ENCODE measurements at regions of chr9 and their contacts with region 1.

Region 1: DNA sequence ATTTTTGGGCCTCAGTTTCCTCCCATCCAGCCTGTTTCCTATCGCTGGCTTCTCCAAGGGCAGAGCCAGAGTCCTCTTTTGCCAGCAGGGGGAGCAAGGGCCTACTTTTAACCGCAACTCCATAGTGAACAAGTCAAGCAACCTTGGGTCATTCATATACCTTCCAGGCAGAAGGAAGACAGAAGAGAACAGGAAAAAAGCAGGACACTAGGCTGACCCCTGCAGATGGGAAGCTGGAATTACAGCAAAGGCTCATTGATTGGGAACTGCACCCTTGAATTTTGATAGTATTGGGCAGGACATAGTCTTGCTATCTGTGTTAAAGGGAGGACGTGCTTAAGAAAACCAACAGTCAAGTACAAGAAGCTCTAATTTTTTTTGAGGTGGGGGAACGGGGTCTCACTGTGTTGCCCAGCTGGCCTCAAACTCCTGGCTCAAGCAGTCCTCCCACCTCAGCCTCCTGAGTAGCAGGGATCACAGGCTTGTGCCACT is 30.1 kb downstream of the QRFP start:
- DNase-seq: peak; percentile 75
- ATAC-seq: peak; percentile 81
- H3K4me3 Mint-ChIP-seq: no peak overlapping the region
- H3K27ac Mint-ChIP-seq: no peak overlapping the region
- H3K4me1 Mint-ChIP-seq: peaks cover 2% of the 10 kb centered on the region
- H3K27me3 Mint-ChIP-seq: no peaks in the 10 kb centered on the region

Region 2: GRCh38 chr9:130220352-130220751 is 646.2 kb before region 1 on chr9:
- CTCF ChIA-PET with region 1: no interaction called
- POLR2A ChIA-PET with region 1: no interaction called
- intact Hi-C with region 1: no loop called
- DNase-seq: no peak
- ATAC-seq: no peak
- H3K4me3 Mint-ChIP-seq: no peak overlapping the region
- H3K27ac Mint-ChIP-seq: no peak overlapping the region
- H3K4me1 Mint-ChIP-seq: no peaks in the 10 kb centered on the region
- H3K27me3 Mint-ChIP-seq: no peaks in the 10 kb centered on the region

Region 3: GRCh38 chr9:130461218-130461630 is 405.3 kb before region 1 on chr9:
- CTCF ChIA-PET with region 1: no interaction called
- POLR2A ChIA-PET with region 1: no interaction called
- intact Hi-C with region 1: loop called in 1 of 2 experiments (anchors 10 kb)
- DNase-seq: peak; percentile 83
- ATAC-seq: peak; percentile 71
- H3K4me3 Mint-ChIP-seq: no peak overlapping the region
- H3K27ac Mint-ChIP-seq: no peak overlapping the region
- H3K4me1 Mint-ChIP-seq: no peaks in the 10 kb centered on the region
- H3K27me3 Mint-ChIP-seq: peaks cover 17% of the 10 kb centered on the region

Region 4: GRCh38 chr9:130480331-130481072 is 386.0 kb before region 1 on chr9:
- CTCF ChIA-PET with region 1: no interaction called
- POLR2A ChIA-PET with region 1: no interaction called
- intact Hi-C with region 1: no loop called
- DNase-seq: no peak
- ATAC-seq: no peak
- H3K4me3 Mint-ChIP-seq: no peak overlapping the region
- H3K27ac Mint-ChIP-seq: no peak overlapping the region
- H3K4me1 Mint-ChIP-seq: no peaks in the 10 kb centered on the region
- H3K27me3 Mint-ChIP-seq: peaks cover 15% of the 10 kb centered on the region

Region 5: DNA sequence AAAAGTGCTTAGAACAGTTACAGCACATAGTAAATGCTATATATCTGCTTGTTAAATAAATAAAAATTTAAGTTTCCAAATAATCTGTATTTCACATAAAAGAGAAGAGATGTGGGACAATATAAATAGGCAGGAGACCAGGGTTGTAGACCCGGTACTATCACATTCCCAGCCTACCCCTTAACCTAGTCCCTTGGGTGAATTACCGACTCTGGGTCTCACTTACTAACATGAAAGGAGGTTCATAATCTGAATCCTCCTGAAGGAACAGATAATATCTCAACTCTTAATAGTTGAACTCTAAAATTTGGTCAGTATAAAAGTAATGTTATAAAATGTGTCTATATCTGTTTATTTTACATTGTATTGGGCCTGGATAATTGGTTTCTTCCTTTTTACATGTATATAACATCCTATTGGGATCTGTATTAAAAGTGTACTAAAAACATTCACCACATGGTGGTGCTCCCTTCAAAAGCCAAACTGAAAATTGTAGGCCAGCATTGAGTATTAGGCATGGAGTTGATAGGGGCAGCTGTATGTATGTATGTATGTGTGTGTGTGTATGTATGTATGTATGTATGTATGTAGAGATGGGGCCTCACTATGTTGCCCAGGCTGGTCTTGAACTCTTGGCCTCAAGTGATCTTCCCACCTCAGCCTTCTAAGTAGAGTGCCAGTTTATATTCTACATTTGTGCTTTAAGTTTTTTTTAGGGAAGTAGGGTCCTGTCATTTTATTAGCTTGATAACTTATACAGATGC is 95.7 kb before region 1 on chr9:
- CTCF ChIA-PET with region 1: interaction called, 38 read pairs
- POLR2A ChIA-PET with region 1: no interaction called
- intact Hi-C with region 1: loop called (anchors 1 kb)
- DNase-seq: no peak
- ATAC-seq: peak; percentile 73
- H3K4me3 Mint-ChIP-seq: no peak overlapping the region
- H3K27ac Mint-ChIP-seq: no peak overlapping the region
- H3K4me1 Mint-ChIP-seq: peaks cover 23% of the 10 kb centered on the region
- H3K27me3 Mint-ChIP-seq: no peaks in the 10 kb centered on the region

Region 6: GRCh38 chr9:130854092-130854491 is 12.4 kb before region 1 on chr9:
- CTCF ChIA-PET with region 1: interaction called, 11 read pairs
- POLR2A ChIA-PET with region 1: no interaction called
- intact Hi-C with region 1: no loop called
- DNase-seq: no peak
- ATAC-seq: no peak
- H3K4me3 Mint-ChIP-seq: no peak overlapping the region
- H3K27ac Mint-ChIP-seq: no peak overlapping the region
- H3K4me1 Mint-ChIP-seq: peaks cover 3% of the 10 kb centered on the region
- H3K27me3 Mint-ChIP-seq: no peaks in the 10 kb centered on the region

Region 7: GRCh38 chr9:130997925-130998596 is 131.5 kb after region 1 on chr9:
- CTCF ChIA-PET with region 1: interaction called, 7 read pairs
- POLR2A ChIA-PET with region 1: no interaction called
- intact Hi-C with region 1: loop called in 1 of 2 experiments (anchors 1 kb)
- DNase-seq: peak; percentile 80
- ATAC-seq: peak; percentile 63
- H3K4me3 Mint-ChIP-seq: no peak overlapping the region
- H3K27ac Mint-ChIP-seq: no peak overlapping the region
- H3K4me1 Mint-ChIP-seq: no peaks in the 10 kb centered on the region
- H3K27me3 Mint-ChIP-seq: peaks cover 12% of the 10 kb centered on the region

Region 8: GRCh38 chr9:131008909-131009618 is 142.5 kb after region 1 on chr9 and contains the start of gene LAMC3:
- CTCF ChIA-PET with region 1: no interaction called
- POLR2A ChIA-PET with region 1: no interaction called
- intact Hi-C with region 1: no loop called
- DNase-seq: peak; percentile 39
- ATAC-seq: peak; percentile 55
- H3K4me3 Mint-ChIP-seq: peak within 1 kb of the TSS; percentile 53
- H3K27ac Mint-ChIP-seq: no peak within 1 kb of the TSS
- H3K4me1 Mint-ChIP-seq: no peaks in the 10 kb centered on the region
- H3K27me3 Mint-ChIP-seq: peaks cover 16% of the 10 kb centered on the region
- total RNA-seq, gene LAMC3: 0.40 to 0.59 TPM

Region 9: GRCh38 chr9:131262327-131263032 is 396.0 kb after region 1 on chr9:
- CTCF ChIA-PET with region 1: no interaction called
- POLR2A ChIA-PET with region 1: no interaction called
- intact Hi-C with region 1: no loop called
- DNase-seq: peak; percentile 9
- ATAC-seq: no peak
- H3K4me3 Mint-ChIP-seq: peak overlapping the region; percentile 15
- H3K27ac Mint-ChIP-seq: peak overlapping the region; percentile 81
- H3K4me1 Mint-ChIP-seq: peaks cover 68% of the 10 kb centered on the region
- H3K27me3 Mint-ChIP-seq: no peaks in the 10 kb centered on the region

Measured in activated CD4-positive, alpha-beta T cell treated with anti-CD3 and anti-CD28 coated beads for 36 hours (primary cell).